Adrenal gland (tissue), 19 donors: ENCODE measurements at regions of chr4 and their contacts with region 1.

Region 1: GRCh38 chr4:26410385-26411293 is 79.6 kb downstream of the CCKAR start:
- DNase-seq: peak in 4 of 7 donors; percentile 21 to 57 (median 46)
- H3K4me3 ChIP-seq: no peak overlapping the region
- H3K27ac ChIP-seq: no peak overlapping the region
- H3K4me1 ChIP-seq: peaks cover 0 to 7% of the 10 kb centered on the region in 2 donors
- H3K27me3 ChIP-seq: no peaks in the 10 kb centered on the region
- CTCF ChIP-seq: peak; percentile 40 to 83 (median 69)
- POLR2A ChIP-seq: no peak

Region 2: DNA sequence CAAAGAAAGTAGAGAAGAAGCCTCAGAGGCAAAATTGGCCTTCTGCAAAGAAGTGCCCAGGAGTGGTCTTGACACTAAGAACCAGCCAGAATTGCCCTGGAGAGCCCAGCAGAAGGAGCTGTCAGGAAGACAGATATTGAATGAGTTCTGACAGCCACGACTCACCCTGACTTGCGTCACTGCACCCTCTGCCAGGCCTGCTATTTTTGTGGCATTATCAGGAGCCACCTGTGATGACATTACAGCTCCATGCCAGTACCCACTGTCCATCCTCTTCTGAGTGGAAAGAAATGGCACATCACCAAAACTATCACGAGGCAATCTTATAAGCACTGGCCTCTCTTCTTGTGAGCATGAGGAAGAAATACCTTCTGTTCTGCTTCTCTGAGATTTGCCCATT is 428.9 kb before region 1 on chr4:
- intact Hi-C with region 1: loop called in 1 of 2 experiments (anchors 10 kb)
- DNase-seq: no peak
- H3K4me3 ChIP-seq: no peak overlapping the region
- H3K27ac ChIP-seq: no peak overlapping the region
- H3K4me1 ChIP-seq: no peaks in the 10 kb centered on the region
- H3K27me3 ChIP-seq: no peaks in the 10 kb centered on the region
- CTCF ChIP-seq: no peak
- POLR2A ChIP-seq: no peak

Region 3: DNA sequence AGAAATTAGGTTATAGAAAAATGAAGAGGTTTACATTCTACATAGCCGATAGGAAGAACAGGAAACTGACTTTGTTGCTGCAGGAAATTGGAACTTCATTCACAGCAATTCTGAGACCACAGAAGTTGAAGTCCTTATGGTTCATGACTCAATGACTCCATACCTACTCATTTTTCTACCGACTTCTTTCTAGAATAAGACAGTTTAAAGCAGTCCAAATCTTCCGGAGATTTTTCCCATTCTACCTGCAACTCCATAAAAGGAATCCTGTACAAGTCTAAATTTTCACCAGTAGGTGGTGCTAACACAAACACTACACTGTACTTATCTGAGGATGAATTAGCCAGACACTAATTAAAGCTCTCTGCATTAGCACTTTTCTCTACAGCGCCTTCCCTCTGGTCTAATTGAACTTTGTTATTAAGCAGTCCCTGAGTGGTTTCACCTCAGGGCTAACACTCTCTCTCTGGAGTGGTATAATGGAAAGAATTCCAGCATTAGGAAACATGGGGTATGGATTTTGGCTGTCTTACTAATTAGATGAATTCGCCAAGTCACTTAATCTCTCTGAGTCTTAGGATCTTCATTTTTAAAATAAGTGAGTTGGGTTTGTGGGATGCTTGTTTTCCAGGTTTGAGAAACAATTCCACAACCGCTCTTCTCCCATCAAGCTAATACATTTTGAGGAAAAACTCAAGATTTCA is 328.7 kb before region 1 on chr4:
- intact Hi-C with region 1: loop called (anchors 10 kb)
- DNase-seq: no peak
- H3K4me3 ChIP-seq: no peak overlapping the region
- H3K27ac ChIP-seq: no peak overlapping the region
- H3K4me1 ChIP-seq: peaks cover 0 to 16% of the 10 kb centered on the region in 2 donors
- H3K27me3 ChIP-seq: peaks cover 6% of the 10 kb centered on the region
- CTCF ChIP-seq: peak; percentile 48 to 70 (median 62)
- POLR2A ChIP-seq: no peak

Region 4: GRCh38 chr4:26267087-26267486 is 143.6 kb before region 1 on chr4:
- intact Hi-C with region 1: no loop called
- DNase-seq: peak in 3 of 7 donors; percentile 10 to 58 (median 19)
- H3K4me3 ChIP-seq: no peak overlapping the region
- H3K27ac ChIP-seq: no peak overlapping the region
- H3K4me1 ChIP-seq: no peaks in the 10 kb centered on the region
- H3K27me3 ChIP-seq: no peaks in the 10 kb centered on the region
- CTCF ChIP-seq: no peak
- POLR2A ChIP-seq: no peak

Region 5: DNA sequence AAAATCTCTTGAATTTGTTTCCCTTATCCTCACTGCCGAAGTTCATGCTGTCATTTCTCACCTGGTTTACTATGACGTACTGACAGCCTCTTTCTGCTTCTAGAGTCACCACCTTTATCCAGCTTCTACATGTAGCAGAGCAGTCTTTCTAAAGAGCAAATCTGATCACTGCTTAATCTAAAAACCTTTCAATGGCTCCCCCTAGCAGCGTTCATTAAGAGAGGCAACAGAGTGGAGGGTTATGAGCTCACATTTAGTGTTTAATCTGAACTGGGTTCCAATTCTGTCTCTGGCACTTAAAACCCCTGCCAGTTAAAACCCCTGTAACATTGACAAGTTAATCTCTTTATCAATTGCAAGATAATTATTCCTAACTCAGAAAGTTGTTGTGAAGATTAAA is 85.4 kb before region 1 on chr4:
- intact Hi-C with region 1: loop called (anchors 5 kb)
- DNase-seq: no peak
- H3K4me3 ChIP-seq: no peak overlapping the region
- H3K27ac ChIP-seq: no peak overlapping the region
- H3K4me1 ChIP-seq: peaks cover 7 to 37% of the 10 kb centered on the region in 2 donors
- H3K27me3 ChIP-seq: no peaks in the 10 kb centered on the region
- CTCF ChIP-seq: peak in 3 of 6 experiments; percentile 10 to 22 (median 20)
- POLR2A ChIP-seq: no peak

Region 6: GRCh38 chr4:26330186-26330787 is 80.4 kb before region 1 on chr4:
- intact Hi-C with region 1: loop called (anchors 5 kb)
- DNase-seq: no peak
- H3K4me3 ChIP-seq: no peak overlapping the region
- H3K27ac ChIP-seq: no peak overlapping the region
- H3K4me1 ChIP-seq: peaks cover 5 to 21% of the 10 kb centered on the region in 2 donors
- H3K27me3 ChIP-seq: no peaks in the 10 kb centered on the region
- CTCF ChIP-seq: peak; percentile 56 to 78 (median 62)
- POLR2A ChIP-seq: no peak